BJ (cell line): ENCODE measurements at regions of chr14 and their contacts with region 1.

Region 1: DNA sequence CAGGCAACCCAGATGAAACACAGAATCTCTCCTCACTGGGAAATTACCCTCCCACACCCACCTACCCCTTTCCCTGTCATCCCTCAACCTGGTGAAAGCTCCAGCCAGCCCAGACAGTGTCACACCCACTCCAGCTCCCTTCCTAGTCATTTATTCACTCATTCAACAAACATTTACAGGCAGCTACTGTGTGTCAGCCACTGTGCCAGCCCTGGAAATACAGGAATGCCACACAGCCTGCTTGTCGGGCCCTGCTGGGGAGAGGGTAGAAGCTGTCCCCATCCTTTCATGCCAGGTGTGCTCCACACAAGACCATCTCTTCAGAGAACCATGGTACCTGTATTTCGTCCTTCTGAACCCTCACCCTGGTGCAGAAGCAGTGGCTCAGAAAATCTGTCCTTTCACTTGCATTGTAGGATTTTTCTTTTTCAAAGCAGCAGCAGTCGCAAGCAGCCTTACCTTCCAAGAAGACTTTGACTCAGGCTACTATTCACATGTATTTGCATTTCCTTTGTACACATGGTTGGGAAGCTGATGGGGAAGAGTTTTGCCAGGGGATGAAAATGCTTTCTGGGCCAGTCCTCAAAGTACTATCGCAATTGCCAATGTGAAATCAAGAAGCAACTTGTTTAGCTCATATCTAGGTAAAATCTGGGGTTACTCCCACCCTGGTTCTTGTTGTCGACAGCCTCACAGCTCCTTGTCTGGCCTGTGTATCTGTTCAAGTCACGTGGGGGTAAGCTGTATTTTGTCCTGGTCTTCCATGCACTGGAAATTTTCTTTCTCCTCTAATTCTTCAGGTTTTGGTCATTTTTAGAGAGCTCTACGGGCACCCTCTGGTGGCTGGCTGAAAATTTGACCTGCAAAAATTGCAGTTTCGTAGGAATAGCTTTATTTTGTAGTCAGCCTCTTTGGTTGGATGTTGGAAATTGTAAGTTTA is 147.4 kb upstream of the EGLN3 start:
- DNase-seq: no peak
- H3K4me3 ChIP-seq: no peak overlapping the region
- H3K27me3 ChIP-seq: peaks cover 3% of the 10 kb centered on the region
- CTCF ChIP-seq: peak; percentile 73

Region 2: GRCh38 chr14:33839193-33840076 is 258.9 kb before region 1 on chr14:
- CTCF ChIA-PET with region 1: interaction called, 304 read pairs
- POLR2A ChIA-PET with region 1: no interaction called
- DNase-seq: no peak
- H3K4me3 ChIP-seq: no peak overlapping the region
- H3K27me3 ChIP-seq: peaks cover 3% of the 10 kb centered on the region; the same call in 1 of the 2 replicates
- CTCF ChIP-seq: peak; percentile 81

Region 3: DNA sequence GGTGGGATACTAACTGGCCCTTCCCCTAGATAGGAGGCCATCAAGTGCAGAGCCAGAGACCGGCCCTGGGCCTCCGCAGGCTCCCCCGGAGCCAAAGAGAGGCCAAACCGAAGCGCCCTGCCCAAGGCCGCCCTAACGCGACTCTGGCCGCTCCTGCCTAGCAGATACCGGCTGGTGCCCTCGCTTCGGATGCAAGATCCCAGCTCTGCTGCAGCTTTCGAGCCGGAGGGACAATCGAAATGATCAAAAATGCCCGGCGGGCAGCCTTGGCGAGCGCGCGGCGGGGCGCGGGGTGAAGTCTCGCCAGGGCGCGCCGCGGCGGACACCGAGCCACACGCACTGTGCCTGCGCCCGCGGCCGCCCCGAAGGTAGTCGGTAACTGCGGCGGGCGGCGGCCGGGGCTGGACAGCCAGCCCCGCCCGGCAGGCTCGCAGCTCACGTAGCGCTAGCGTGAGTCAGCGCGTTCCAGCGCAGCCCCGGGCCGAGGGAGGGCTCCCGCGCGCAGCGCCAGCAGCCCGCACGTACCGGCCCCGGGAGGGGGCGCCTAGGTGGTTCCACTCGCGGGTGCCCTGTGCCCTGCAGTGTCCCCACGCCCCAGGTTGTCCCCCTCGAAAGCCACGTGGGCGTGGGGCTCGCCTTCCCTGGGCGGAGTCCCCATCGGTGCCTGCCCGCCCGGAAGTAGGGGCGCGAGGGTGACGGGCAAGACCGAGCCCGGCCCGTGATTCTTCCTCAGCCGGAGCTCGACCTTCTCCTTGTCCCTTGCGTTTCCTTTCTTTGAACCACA is 38.3 kb before region 1 on chr14:
- CTCF ChIA-PET with region 1: interaction called, 11 read pairs
- POLR2A ChIA-PET with region 1: no interaction called
- DNase-seq: no peak
- H3K4me3 ChIP-seq: peak overlapping the region; percentile 54
- H3K27me3 ChIP-seq: peaks cover 4% of the 10 kb centered on the region
- CTCF ChIP-seq: peak; percentile 36

Region 4: GRCh38 chr14:34075042-34075744 is 23.1 kb before region 1 on chr14:
- CTCF ChIA-PET with region 1: no interaction called
- POLR2A ChIA-PET with region 1: no interaction called
- DNase-seq: no peak
- H3K4me3 ChIP-seq: no peak overlapping the region
- H3K27me3 ChIP-seq: no peaks in the 10 kb centered on the region; the same call in 1 of the 2 replicates
- CTCF ChIP-seq: no peak

Region 5: GRCh38 chr14:34087556-34087955 is 10.8 kb before region 1 on chr14:
- CTCF ChIA-PET with region 1: interaction called, 26 read pairs
- POLR2A ChIA-PET with region 1: no interaction called
- DNase-seq: no peak
- H3K4me3 ChIP-seq: no peak overlapping the region
- H3K27me3 ChIP-seq: peaks cover 5% of the 10 kb centered on the region; the same call in 1 of the 2 replicates
- CTCF ChIP-seq: no peak

Region 6: GRCh38 chr14:34227834-34228649 is 129.7 kb after region 1 on chr14:
- CTCF ChIA-PET with region 1: interaction called, 29 read pairs
- POLR2A ChIA-PET with region 1: no interaction called
- DNase-seq: no peak
- H3K4me3 ChIP-seq: no peak overlapping the region
- H3K27me3 ChIP-seq: no peaks in the 10 kb centered on the region
- CTCF ChIP-seq: peak; percentile 81

Region 7: GRCh38 chr14:34235643-34236300 is 137.5 kb after region 1 on chr14:
- CTCF ChIA-PET with region 1: interaction called, 29 read pairs
- POLR2A ChIA-PET with region 1: no interaction called
- DNase-seq: no peak
- H3K4me3 ChIP-seq: no peak overlapping the region
- H3K27me3 ChIP-seq: no peaks in the 10 kb centered on the region
- CTCF ChIP-seq: no peak